Cardiac septum (tissue), 1 donor: ENCODE measurements at regions of chr3 and their contacts with region 1.

Region 1: DNA sequence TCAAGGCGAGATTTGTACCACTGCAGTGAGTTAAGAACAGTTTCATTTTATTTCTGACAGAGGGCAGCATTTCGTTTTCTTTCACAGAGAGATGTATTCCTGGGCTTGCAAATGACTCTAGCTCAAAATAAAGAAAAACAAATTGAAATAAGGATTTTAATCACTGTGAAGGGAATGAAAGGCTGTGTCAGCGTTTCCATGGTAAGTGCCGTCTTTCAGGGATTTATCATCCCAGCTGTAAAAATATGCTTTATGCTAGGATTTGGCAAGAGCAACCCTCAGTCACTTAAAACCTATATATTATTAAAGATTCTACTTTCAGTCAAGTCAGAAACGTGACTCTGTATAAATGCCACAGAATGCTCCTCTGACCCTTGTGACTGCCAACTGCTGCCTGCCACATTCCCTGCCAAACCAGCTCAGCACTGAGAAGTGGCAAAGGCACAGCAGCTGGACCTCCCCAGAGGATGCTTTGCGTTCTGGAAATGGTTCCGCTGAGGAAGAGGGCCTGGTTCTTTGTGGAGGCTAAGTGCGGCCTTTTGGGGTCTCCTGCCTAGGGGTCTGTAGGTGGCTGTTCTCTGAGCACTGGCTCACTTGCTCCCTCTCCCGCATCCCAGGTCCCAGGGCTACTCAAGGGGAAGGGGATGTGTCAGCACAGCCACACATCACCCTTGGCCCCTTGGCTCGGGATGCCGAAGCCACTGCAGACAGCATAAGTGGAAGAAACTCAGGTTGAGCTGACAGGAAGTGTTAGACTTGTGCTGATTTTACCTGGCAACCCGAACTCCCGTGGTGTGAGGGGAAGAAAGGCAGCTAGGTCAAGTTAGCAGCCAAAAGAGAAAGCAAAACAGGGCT is 56.6 kb upstream of the POMGNT2 start:
- DNase-seq: no peak

Region 2: DNA sequence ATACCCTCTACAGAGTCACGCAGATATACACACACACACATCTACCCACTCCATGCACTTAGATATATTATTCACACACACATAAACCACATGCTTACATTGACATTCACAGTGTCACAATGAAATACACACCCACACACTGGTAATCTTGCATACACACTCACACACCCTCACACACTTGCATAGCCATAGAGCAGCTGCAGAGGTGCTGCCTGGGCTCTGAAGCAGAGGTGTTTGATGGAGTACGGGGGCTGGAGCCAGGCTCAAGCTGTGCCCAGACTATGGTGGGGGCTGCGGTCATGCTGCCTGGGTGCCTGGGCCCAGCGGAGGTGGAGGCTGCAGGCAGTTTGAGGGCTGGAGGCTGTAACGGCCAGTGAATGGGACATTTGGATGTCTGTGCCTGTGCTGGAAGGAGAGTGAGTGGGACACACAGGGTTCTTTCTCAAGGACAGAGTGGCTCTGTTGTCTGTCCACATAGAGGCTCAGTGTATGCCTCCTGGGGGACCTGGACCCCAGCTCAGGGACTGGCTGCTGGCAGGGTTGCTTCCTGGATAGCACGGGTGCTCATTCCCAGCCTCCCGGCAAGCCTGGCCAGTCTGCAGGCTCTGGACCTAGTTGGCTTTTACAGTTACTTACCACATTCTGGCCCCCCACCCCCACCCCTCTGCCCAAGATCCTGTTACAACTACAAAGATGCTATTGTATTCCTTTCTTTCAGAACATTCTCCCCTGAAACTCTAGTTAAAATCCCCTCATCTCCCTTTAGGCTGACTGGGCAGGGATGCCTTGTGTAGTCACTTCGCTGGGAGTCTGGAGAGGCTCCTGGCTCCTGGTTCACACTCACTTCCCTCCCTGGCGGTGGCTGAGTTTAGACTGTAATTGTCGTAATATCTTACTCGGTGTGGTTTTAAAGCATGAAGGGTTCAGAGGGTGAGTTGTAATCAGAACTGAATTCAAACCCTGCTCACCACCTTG is 170.8 kb before region 1 on chr3:
- intact Hi-C with region 1: no loop called
- DNase-seq: no peak

Region 3: GRCh38 chr3:43378066-43378935 is 215.8 kb after region 1 on chr3:
- intact Hi-C with region 1: loop called (anchors 5 kb)
- DNase-seq: no peak